Calu3 (cell line): ENCODE measurements at regions of chr7 and their contacts with region 1.

Region 1: DNA sequence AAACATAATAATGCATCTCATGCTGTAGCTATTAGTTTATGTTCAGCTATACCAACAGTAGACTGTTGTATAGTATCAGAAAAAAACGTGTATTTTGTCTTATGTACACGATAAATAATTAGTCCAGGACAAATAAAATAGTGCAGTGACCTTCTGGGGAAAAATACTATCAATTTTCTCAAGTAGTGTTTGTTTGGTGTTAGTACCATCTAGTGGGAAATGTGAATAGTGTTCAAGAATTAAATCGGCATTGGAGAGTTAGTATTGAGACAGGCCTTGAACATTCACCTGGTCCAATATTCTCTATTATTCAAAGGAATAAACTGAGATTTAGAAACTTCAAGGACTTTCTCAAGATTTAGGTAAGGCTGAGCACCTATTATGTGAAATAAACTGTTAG is 21.7 kb upstream of the OR2A5 start:
- DNase-seq: no peak
- H3K4me3 Mint-ChIP-seq: no peak overlapping the region
- H3K27ac Mint-ChIP-seq: no peak overlapping the region
- H3K4me1 Mint-ChIP-seq: no peaks in the 10 kb centered on the region
- H3K27me3 Mint-ChIP-seq: no peaks in the 10 kb centered on the region
- CTCF ChIP-seq: no peak

Region 2: DNA sequence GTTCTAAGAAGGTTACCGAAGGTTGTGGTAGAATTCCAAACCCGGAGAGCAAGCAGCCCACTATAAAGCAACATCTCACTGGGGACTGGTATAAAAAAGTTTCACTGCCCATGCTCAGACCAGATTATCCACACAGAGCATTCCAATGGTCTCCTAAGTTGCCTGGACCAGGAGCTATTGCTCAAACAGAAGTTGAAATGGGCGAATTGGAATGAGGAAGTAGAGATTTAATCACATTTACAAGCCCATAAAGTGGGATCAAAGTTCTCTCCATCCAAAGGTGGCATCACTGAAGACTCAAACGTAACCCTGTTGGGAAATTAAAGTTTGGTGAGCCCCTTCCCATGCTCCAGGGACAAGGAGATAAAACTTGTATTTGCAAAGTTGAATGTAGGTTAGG is 52.6 kb before region 1 on chr7:
- CTCF ChIA-PET with region 1: no interaction called
- intact Hi-C with region 1: loop called (anchors 5 kb)
- DNase-seq: peak; percentile 23
- H3K4me3 Mint-ChIP-seq: no peak overlapping the region
- H3K27ac Mint-ChIP-seq: no peak overlapping the region
- H3K4me1 Mint-ChIP-seq: peaks cover 26% of the 10 kb centered on the region
- H3K27me3 Mint-ChIP-seq: no peaks in the 10 kb centered on the region
- CTCF ChIP-seq: no peak

Region 3: DNA sequence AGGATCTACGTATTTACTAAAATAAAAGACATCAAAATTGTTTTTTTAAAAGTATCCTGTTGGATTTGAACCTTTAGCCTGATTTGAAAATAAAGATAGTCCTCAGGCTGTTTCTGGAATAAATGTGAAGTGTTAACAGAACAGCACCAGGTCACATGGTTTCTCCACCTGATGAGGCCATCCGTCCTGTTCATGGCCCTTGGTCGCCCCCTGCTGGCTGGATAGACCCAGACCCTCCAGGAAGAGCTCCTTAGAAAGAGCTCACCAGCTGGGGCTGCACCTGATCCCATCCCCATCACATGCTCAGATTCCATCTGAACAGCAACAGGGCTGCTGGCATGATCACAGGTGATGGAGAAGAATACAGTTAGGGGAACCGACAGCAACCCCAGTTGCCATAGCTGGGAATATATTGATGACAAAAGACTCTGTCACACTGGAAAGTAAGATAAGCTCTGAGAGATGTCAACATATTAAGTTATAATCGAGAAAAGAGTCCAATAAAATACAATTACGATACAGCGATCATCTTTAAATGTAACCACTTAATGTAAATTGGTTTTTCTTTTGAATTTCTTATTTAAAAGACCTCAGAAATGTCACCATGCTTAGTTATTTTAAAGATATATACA is 100.7 kb after region 1 on chr7:
- CTCF ChIA-PET with region 1: interaction called, 3 read pairs
- intact Hi-C with region 1: loop called (anchors 5 kb)
- DNase-seq: peak; percentile 94
- H3K4me3 Mint-ChIP-seq: no peak overlapping the region
- H3K27ac Mint-ChIP-seq: no peak overlapping the region
- H3K4me1 Mint-ChIP-seq: no peaks in the 10 kb centered on the region
- H3K27me3 Mint-ChIP-seq: no peaks in the 10 kb centered on the region
- CTCF ChIP-seq: peak; percentile 90